ENCODE measurements at regions of chr1 and their contacts with region 1.

Region 1: GRCh38 chr1:228405987-228406265 is 709 bp downstream of the TRIM11 start:
- DNase-seq: no peak
- ATAC-seq: peak; percentile 2
- H3K4me3 Mint-ChIP-seq: peak overlapping the region; percentile 92
- H3K27ac Mint-ChIP-seq: peak overlapping the region; percentile 93
- H3K4me1 Mint-ChIP-seq: peaks cover 46% of the 10 kb centered on the region
- H3K27me3 Mint-ChIP-seq: no peaks in the 10 kb centered on the region

Region 2: GRCh38 chr1:227734856-227735538 is 670.9 kb before region 1 on chr1 and contains the starts of genes JMJD4 and SNAP47:
- CTCF ChIA-PET with region 1: no interaction called
- POLR2A ChIA-PET with region 1: no interaction called
- intact Hi-C with region 1: loop called in 1 of 2 experiments (anchors 2 kb)
- DNase-seq: peak; percentile 95
- ATAC-seq: peak; percentile 94
- H3K4me3 Mint-ChIP-seq: peak within 1 kb of the TSS; percentile 89
- H3K27ac Mint-ChIP-seq: peak within 1 kb of the TSS; percentile 86
- H3K4me1 Mint-ChIP-seq: peaks cover 25% of the 10 kb centered on the region
- H3K27me3 Mint-ChIP-seq: no peaks in the 10 kb centered on the region
- total RNA-seq, gene JMJD4: 14.4 to 18.1 TPM
- total RNA-seq, gene SNAP47: 30.3 to 31.2 TPM

Region 3: GRCh38 chr1:227924833-227925574 is 480.9 kb before region 1 on chr1:
- CTCF ChIA-PET with region 1: no interaction called
- POLR2A ChIA-PET with region 1: no interaction called
- intact Hi-C with region 1: no loop called
- DNase-seq: no peak
- ATAC-seq: no peak
- H3K4me3 Mint-ChIP-seq: no peak overlapping the region
- H3K27ac Mint-ChIP-seq: no peak overlapping the region
- H3K4me1 Mint-ChIP-seq: no peaks in the 10 kb centered on the region
- H3K27me3 Mint-ChIP-seq: no peaks in the 10 kb centered on the region

Region 4: GRCh38 chr1:228139944-228140656 is 265.8 kb before region 1 on chr1 and contains the start of gene GUK1:
- CTCF ChIA-PET with region 1: no interaction called
- POLR2A ChIA-PET with region 1: no interaction called
- intact Hi-C with region 1: loop called (anchors 1 to 10 kb)
- DNase-seq: peak; percentile 100
- ATAC-seq: peak; percentile 95
- H3K4me3 Mint-ChIP-seq: peak within 1 kb of the TSS; percentile 97
- H3K27ac Mint-ChIP-seq: peak within 1 kb of the TSS; percentile 98
- H3K4me1 Mint-ChIP-seq: peaks cover 24% of the 10 kb centered on the region
- H3K27me3 Mint-ChIP-seq: peaks cover 2% of the 10 kb centered on the region
- total RNA-seq, gene GUK1: 196 to 270 TPM

Region 5: DNA sequence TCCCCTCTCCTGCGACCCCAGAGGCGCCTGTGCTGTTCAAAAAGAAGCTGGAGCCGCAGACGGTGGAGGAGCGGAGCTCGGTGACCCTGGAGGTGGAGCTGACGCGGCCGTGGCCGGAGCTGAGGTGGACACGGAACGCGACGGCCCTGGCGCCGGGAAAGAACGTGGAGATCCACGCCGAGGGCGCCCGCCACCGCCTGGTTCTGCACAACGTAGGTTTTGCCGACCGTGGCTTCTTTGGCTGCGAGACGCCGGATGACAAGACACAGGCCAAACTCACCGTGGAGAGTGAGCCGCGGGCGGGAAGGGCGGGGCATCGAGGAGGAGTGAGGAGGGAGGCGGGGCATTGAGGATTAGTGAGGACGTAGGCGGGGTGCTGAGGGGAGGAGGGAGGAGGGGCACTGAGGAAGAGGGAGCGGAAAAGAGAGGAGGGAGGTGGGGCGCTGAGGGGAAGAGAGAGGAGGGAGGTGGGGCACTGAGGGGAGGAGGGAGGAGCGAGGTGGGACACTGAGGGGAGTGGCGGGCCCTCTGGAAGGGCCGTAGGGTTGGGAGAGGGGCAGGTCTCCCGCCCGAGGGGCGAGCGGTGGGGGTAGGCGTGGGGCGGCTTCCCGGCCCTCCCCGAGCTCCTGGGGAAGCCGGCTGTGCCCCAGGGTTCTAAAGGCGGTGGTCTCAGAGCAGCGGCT is 130.0 kb before region 1 on chr1:
- CTCF ChIA-PET with region 1: interaction called, 3 read pairs
- POLR2A ChIA-PET with region 1: no interaction called
- intact Hi-C with region 1: loop called in 1 of 2 experiments (anchors 1 kb)
- DNase-seq: peak; percentile 94
- ATAC-seq: peak; percentile 96
- H3K4me3 Mint-ChIP-seq: peak overlapping the region; percentile 71
- H3K27ac Mint-ChIP-seq: no peak overlapping the region
- H3K4me1 Mint-ChIP-seq: peaks cover 6% of the 10 kb centered on the region
- H3K27me3 Mint-ChIP-seq: no peaks in the 10 kb centered on the region

Region 6: DNA sequence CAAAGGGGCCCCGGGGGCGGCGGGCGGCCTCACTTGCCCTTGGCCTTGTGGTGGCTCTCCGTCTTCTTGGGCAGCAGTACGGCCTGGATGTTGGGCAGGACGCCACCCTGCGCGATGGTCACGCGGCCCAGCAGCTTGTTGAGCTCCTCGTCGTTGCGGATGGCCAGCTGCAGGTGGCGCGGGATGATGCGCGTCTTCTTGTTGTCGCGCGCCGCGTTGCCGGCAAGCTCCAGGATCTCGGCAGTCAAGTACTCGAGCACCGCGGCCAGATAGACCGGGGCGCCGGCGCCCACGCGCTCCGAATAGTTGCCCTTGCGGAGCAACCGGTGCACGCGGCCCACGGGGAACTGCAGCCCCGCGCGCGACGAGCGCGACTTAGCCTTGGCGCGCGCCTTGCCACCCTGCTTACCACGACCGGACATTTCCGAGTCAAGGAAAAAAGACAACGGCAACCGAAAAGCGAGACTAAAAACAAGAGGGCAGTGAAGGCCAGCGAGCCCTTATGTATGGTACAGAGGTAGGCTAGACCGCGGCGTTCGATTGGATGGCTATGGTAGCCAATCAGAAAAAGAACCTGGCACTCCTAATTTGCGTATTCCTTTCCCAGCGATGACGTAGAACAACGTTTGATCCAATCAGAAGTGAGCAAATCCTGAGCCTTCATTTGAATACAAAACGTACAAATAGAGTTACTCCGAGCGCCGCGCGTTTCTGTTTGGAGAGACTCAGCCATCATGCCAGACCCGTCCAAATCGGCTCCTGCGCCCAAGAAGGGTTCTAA is 51.7 kb after region 1 on chr1:
- CTCF ChIA-PET with region 1: no interaction called
- POLR2A ChIA-PET with region 1: interaction called, 14 read pairs
- intact Hi-C with region 1: loop called (anchors 1 to 2 kb)
- DNase-seq: peak; percentile 92
- ATAC-seq: peak; percentile 89
- H3K4me3 Mint-ChIP-seq: peak overlapping the region; percentile 88
- H3K27ac Mint-ChIP-seq: peak overlapping the region; percentile 96
- H3K4me1 Mint-ChIP-seq: peaks cover 30% of the 10 kb centered on the region
- H3K27me3 Mint-ChIP-seq: no peaks in the 10 kb centered on the region

Region 7: GRCh38 chr1:228486596-228487335 is 80.8 kb after region 1 on chr1:
- CTCF ChIA-PET with region 1: no interaction called
- POLR2A ChIA-PET with region 1: no interaction called
- intact Hi-C with region 1: loop called in 1 of 2 experiments (anchors 1 kb)
- DNase-seq: peak; percentile 87
- ATAC-seq: peak; percentile 66
- H3K4me3 Mint-ChIP-seq: peak overlapping the region; percentile 96
- H3K27ac Mint-ChIP-seq: peak overlapping the region; percentile 99
- H3K4me1 Mint-ChIP-seq: peaks cover 40% of the 10 kb centered on the region
- H3K27me3 Mint-ChIP-seq: no peaks in the 10 kb centered on the region

Region 8: DNA sequence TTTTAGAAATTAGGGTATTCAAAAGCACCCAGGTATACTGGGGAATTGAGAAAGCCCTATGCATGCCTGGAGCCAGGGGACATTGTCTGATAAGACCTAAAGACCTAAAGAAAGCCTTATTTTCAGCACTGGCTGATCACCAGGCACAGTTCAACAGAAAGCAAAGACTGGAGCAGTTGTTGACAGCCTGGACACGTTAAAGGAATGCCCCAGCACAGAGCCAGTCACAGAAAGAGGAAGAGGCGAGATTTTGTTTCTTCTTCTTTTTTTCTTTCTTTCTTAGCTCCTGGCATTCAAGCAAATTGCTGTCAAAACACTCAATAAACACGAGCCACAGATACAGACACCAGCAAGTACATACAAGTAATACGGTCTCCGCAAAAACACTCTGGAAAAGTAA is 121.7 kb after region 1 on chr1:
- CTCF ChIA-PET with region 1: no interaction called
- POLR2A ChIA-PET with region 1: no interaction called
- intact Hi-C with region 1: no loop called
- DNase-seq: no peak
- ATAC-seq: no peak
- H3K4me3 Mint-ChIP-seq: no peak overlapping the region
- H3K27ac Mint-ChIP-seq: no peak overlapping the region
- H3K4me1 Mint-ChIP-seq: no peaks in the 10 kb centered on the region
- H3K27me3 Mint-ChIP-seq: peaks cover 22% of the 10 kb centered on the region

Measured in activated CD4-positive, alpha-beta T cell treated with anti-CD3 and anti-CD28 coated beads for 36 hours (primary cell).